Activated T-helper 1 cell treated with anti-CD3 and anti-CD28 coated beads, Interleukin-12 subunit alpha, Interleukin-12 subunit beta, Interleukin-2, Interleukin-4 antibody, amounts not matched to agents 30 ng/mL and 10 ng/mL and 1 ng/mL, durations not matched to agents 14 hours and 24 hours and 36 hours (primary cell): ENCODE measurements at regions of chr14 and their contacts with region 1.

Region 1: DNA sequence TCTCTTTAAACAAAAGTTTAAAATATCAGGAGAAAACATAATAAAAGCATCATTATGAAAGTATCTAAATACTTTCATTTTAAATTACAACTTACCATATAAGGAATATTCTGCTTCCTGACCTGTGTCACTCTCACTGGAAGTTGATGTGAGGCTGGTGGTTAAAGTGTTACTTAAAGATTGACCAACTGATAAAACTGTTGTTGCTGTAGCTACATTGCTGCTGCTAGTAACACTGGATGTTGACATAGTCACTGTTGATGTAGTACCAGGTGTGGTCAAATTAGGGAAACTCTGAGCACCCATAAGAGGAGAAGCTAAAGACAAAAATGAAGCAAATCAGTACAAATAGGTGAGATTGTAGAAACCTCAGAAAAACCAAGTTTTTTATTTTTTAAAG is 79.9 kb downstream of the HECTD1 start:
- DNase-seq: peak; percentile 56
- H3K4me3 Mint-ChIP-seq: peak overlapping the region; percentile 16
- H3K27ac Mint-ChIP-seq: peak overlapping the region; percentile 64
- H3K4me1 Mint-ChIP-seq: peaks cover 31% of the 10 kb centered on the region
- H3K27me3 Mint-ChIP-seq: no peaks in the 10 kb centered on the region

Region 2: GRCh38 chr14:30943694-30944093 is 184.0 kb before region 1 on chr14:
- intact Hi-C with region 1: no loop called
- DNase-seq: no peak
- H3K4me3 Mint-ChIP-seq: no peak overlapping the region
- H3K27ac Mint-ChIP-seq: no peak overlapping the region
- H3K4me1 Mint-ChIP-seq: no peaks in the 10 kb centered on the region
- H3K27me3 Mint-ChIP-seq: no peaks in the 10 kb centered on the region

Region 3: GRCh38 chr14:31380106-31380505 is 252.4 kb after region 1 on chr14:
- intact Hi-C with region 1: loop called (anchors 1 kb)
- DNase-seq: no peak
- H3K4me3 Mint-ChIP-seq: no peak overlapping the region
- H3K27ac Mint-ChIP-seq: no peak overlapping the region
- H3K4me1 Mint-ChIP-seq: peaks cover 12% of the 10 kb centered on the region
- H3K27me3 Mint-ChIP-seq: no peaks in the 10 kb centered on the region